ENCODE measurements at regions of chr22 and their contacts with region 1.

Region 1: DNA sequence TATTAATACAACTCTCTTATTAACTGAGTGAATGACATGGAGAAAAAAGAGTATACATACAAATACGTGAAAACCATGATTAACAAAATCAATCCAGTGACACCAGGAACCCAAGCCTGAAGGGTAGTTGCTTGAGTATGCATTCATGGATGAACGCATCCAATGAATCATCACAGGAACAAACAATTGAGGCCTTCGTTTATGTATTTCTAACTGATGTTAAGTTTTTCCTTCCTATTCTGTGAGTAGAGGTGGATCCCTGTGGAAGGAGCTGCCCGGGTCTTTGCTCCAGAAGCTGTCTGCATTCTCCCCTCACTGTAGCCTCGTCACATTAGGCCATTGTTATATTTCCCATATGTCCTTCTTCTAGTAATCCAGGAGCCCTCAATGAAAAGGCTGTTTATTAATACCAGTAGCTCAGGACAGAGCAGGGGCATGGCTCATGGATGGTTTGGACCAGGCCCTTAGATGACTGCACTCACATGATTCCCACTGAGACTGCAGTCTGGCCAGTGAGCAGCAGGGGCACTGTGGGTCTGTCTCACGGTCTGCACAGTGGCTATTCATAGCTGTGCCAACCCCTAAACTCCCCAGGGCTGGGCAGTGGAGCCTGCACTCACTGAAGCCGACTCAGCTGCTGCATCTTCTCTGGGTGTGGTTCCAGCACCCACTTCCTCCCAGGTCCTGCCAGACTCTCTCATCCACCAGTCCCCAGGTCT is 128.1 kb upstream of the TOP3B start:
- DNase-seq: peak; percentile 57
- ATAC-seq: peak; percentile 91
- H3K4me3 Mint-ChIP-seq: no peak overlapping the region
- H3K27ac Mint-ChIP-seq: no peak overlapping the region
- H3K4me1 Mint-ChIP-seq: peaks cover 17% of the 10 kb centered on the region
- H3K27me3 Mint-ChIP-seq: peaks cover 9% of the 10 kb centered on the region

Region 2: GRCh38 chr22:22099833-22100812 is 10.6 kb before region 1 on chr22:
- CTCF ChIA-PET with region 1: interaction called, 15 read pairs
- POLR2A ChIA-PET with region 1: no interaction called
- DNase-seq: peak; percentile 22
- ATAC-seq: no peak
- H3K4me3 Mint-ChIP-seq: no peak overlapping the region
- H3K27ac Mint-ChIP-seq: no peak overlapping the region
- H3K4me1 Mint-ChIP-seq: no peaks in the 10 kb centered on the region
- H3K27me3 Mint-ChIP-seq: peaks cover 30% of the 10 kb centered on the region

Region 3: DNA sequence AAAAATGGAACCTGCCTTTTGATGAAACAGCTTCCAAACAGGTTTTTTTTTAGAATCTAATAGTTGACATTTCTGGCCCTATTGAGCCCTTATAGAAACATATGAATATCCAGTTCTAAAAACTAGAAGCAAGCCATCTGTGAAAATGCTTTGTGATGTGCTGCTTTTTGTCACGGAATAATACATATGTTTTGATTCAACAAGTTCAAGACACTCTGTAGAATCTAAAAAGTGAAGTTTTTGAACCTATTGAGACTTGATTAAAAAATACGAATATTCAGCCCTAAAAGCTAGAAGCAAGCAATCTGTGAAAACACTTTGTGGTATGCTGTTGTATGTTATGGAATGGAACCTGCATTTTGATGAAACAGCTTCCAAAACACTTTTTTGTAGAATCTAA is 27.2 kb after region 1 on chr22:
- CTCF ChIA-PET with region 1: interaction called, 15 read pairs
- POLR2A ChIA-PET with region 1: no interaction called
- DNase-seq: no peak
- ATAC-seq: no peak
- H3K4me3 Mint-ChIP-seq: no peak overlapping the region
- H3K27ac Mint-ChIP-seq: no peak overlapping the region
- H3K4me1 Mint-ChIP-seq: no peaks in the 10 kb centered on the region
- H3K27me3 Mint-ChIP-seq: peaks cover 31% of the 10 kb centered on the region